ENCODE measurements at regions of chr4 and their contacts with region 1.

Region 1: GRCh38 chr4:77044461-77045150 is 31.2 kb downstream of the CCNI start:
- DNase-seq: peak; percentile 67
- H3K4me3 ChIP-seq: no peak overlapping the region
- H3K27ac ChIP-seq: no peak overlapping the region
- H3K4me1 ChIP-seq: peaks cover 7% of the 10 kb centered on the region
- H3K27me3 ChIP-seq: no peaks in the 10 kb centered on the region
- CTCF ChIP-seq: peak; percentile 37 to 46
- POLR2A ChIP-seq: no peak

Region 2: DNA sequence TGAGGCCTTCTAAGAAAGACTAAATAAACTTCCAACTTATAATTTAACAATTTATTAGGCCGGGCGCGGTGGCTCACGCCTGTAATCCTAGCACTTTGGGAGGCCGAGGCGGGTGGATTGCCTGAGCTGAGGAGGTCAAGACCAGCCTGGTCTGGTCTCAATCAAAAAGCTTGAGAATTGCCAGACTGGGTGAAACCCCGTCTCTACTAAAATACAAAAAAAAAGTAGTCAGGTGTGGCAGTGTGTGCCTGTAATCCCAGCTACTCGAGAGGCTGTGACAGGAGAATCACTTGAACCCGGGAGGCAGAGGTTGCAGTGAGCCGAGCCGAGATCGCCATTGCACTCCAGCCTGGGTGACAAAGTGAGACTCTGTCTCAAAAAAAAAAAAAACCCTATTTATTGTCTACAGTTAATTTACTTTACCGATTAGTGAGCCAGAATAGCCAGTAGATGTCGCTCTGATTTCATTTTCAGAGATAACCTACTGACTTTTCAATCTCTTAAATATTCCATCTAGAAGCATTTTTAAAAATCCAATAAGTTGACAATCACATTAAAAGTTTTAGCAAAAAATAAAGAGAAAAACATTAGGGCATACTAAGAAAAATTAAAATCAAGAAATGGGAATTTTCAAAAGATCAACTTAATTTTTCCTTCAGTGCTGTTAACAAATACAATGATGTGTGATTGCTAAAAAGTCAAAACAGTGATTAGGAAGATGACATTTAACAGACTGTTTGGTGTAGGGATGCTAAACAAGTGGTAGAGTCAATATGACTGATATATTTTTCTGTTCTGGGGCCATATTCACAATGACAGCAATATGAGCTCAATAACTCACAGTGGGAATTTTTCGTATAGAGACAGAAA is 613.9 kb before region 1 on chr4:
- CTCF ChIA-PET with region 1: no interaction called
- POLR2A ChIA-PET with region 1: no interaction called
- dilution Hi-C with region 1: no loop called
- intact Hi-C with region 1: loop called (anchors 2 kb)
- DNase-seq: peak; percentile 61
- H3K4me3 ChIP-seq: no peak overlapping the region
- H3K27ac ChIP-seq: no peak overlapping the region
- H3K4me1 ChIP-seq: no peaks in the 10 kb centered on the region
- H3K27me3 ChIP-seq: peaks cover 14 to 26% of the 10 kb centered on the region in 2 experiments
- CTCF ChIP-seq: peak; percentile 39
- POLR2A ChIP-seq: no peak

Region 3: GRCh38 chr4:76748649-76749048 is 296.0 kb before region 1 on chr4:
- CTCF ChIA-PET with region 1: interaction called, 8 read pairs
- POLR2A ChIA-PET with region 1: no interaction called
- dilution Hi-C with region 1: no loop called
- intact Hi-C with region 1: loop called (anchors 2 kb)
- DNase-seq: peak; percentile 57
- H3K4me3 ChIP-seq: no peak overlapping the region
- H3K27ac ChIP-seq: no peak overlapping the region
- H3K4me1 ChIP-seq: peaks cover 24% of the 10 kb centered on the region
- H3K27me3 ChIP-seq: no peaks in the 10 kb centered on the region
- CTCF ChIP-seq: peak; percentile 28 to 35
- POLR2A ChIP-seq: no peak

Region 4: GRCh38 chr4:77031544-77031943 is 13.1 kb before region 1 on chr4:
- CTCF ChIA-PET with region 1: interaction called, 21 read pairs
- POLR2A ChIA-PET with region 1: no interaction called
- dilution Hi-C with region 1: no loop called
- intact Hi-C with region 1: no loop called
- DNase-seq: no peak
- H3K4me3 ChIP-seq: no peak overlapping the region
- H3K27ac ChIP-seq: no peak overlapping the region
- H3K4me1 ChIP-seq: no peaks in the 10 kb centered on the region
- H3K27me3 ChIP-seq: no peaks in the 10 kb centered on the region
- CTCF ChIP-seq: no peak
- POLR2A ChIP-seq: no peak

Region 5: DNA sequence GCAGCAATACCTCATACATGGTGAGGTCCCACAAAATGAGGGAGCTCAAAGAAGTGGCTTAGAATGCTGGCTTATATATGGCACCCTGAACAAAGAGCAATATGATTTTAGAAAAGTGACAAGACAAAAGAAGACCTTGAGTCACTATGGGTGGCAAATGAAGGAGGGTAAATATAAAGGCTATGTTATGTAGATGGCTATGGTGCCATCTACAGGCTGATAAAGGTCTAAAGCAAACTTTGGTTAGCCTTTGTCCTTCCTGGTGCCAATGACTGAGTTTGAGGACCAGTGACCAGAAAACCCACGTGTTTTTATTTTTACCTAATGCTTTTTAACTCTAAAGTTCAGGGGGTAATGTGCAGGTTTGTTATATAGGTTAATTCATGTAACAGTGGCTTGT is 264.2 kb after region 1 on chr4:
- CTCF ChIA-PET with region 1: interaction called, 3 read pairs
- POLR2A ChIA-PET with region 1: no interaction called
- dilution Hi-C with region 1: no loop called
- intact Hi-C with region 1: loop called (anchors 2 kb)
- DNase-seq: peak; percentile 8
- H3K4me3 ChIP-seq: no peak overlapping the region
- H3K27ac ChIP-seq: no peak overlapping the region
- H3K4me1 ChIP-seq: no peaks in the 10 kb centered on the region
- H3K27me3 ChIP-seq: peaks cover 2 to 4% of the 10 kb centered on the region in 2 experiments
- CTCF ChIP-seq: peak; percentile 25 to 26
- POLR2A ChIP-seq: no peak